ENCODE measurements at regions of chr4 and their contacts with region 1.

Region 1: DNA sequence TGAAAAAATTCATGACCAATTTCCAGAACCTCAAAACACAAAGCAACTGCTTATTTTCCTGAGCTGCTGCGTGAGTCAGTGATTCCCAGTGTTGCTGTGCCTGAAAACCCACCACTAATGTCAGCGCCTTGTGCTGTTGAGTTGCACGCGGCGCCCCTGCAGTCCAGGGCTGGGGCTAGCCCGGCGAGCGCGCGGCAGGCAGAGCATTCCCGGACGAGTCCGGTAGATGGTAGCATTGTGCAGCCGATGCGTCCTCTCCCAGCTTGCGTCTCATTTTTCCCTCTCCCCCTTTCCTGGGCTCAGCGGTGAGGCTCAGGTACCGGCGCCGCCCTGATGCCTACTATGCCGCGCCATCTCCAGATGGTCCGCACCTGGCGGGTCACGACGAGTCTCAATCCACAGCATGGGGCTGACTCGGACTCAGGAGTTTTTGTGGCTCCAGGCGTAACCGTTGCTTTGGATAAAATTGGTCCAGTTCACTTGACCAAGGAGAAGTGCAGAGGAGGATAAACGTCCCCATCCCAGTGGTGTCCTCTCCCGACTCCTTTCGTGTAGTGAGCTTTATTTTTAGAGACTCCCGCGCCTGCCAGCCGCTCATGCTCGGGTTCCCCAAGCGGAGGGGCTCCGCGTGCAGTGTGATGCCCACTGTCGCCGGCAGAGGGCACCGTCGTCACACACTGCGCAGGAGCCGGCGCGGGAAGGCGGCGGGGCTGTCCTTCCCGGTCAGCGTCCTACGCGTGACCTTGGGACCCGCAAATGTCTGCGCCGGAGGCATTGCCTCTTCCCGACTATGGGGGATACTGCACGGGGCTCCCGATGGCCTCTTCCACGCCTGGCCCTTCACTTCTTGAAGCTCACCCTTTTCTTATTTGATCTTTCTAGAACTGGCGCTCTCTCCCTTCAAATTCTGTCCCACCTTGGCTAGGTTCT is 53.6 kb upstream of the IGFBP7 start:
- DNase-seq: peak; percentile 83

Region 2: DNA sequence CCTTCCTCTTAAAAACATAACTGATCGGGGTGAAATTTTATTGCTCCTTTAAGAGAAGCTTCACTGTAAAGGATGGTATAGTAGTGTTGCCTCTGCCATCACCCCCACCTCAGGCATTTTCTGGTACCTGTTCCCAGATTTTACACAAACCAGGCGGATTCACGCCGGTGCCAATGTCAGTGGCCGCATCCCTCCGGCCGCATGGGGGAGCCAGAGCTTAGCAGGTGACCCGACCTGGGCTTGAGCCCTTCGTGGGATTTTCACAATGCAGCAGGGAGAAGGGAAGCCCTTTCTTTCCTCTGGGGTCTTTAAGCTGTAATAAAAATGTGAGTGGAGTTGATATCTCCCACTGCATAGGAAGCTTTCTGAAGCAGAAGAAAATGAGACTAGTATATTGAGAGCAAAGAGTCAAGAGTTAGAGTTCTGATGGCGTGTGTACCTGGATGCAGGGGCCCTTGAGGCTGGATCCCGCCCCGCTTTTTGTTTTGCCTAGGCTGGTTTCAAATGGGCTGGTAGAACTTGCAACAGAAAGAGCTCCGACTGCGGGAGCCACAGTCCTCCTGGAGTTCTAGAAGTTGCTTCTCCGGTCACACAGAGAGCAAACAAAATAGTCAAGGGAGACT is 125.7 kb before region 1 on chr4:
- CTCF ChIA-PET with region 1: interaction called, 25 read pairs
- POLR2A ChIA-PET with region 1: no interaction called
- DNase-seq: peak; percentile 77

Region 3: DNA sequence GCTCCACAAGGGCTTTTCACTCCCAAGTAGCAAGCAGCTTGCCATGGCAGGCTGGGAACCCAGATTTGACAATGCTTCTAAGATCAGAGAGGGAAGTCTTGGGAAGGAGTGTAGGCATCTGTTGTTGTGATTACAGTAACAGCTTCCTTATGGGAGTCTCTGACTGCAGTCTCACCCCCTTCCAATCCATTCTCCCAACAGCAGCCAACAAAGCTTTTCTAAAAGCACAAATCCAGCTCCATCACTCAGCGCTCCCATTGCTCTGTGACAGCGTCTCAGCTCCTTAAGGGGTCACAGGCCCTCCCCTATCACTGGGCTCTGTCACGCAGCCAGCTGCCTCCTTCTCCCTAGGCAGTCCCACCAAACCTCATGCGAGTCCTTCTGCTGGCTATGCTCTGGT is 60.7 kb before region 1 on chr4:
- CTCF ChIA-PET with region 1: interaction called, 10 read pairs
- POLR2A ChIA-PET with region 1: no interaction called
- DNase-seq: no peak

Region 4: GRCh38 chr4:57442241-57442640 is 278.4 kb after region 1 on chr4:
- CTCF ChIA-PET with region 1: interaction called, 10 read pairs
- POLR2A ChIA-PET with region 1: no interaction called
- DNase-seq: no peak